ENCODE measurements at regions of chr20 and their contacts with region 1.

Region 1: GRCh38 chr20:48657475-48658470 is 170.0 kb downstream of the PREX1 start:
- DNase-seq: peak; percentile 19
- H3K4me3 ChIP-seq: no peak overlapping the region
- CTCF ChIP-seq: peak; percentile 87

Region 2: DNA sequence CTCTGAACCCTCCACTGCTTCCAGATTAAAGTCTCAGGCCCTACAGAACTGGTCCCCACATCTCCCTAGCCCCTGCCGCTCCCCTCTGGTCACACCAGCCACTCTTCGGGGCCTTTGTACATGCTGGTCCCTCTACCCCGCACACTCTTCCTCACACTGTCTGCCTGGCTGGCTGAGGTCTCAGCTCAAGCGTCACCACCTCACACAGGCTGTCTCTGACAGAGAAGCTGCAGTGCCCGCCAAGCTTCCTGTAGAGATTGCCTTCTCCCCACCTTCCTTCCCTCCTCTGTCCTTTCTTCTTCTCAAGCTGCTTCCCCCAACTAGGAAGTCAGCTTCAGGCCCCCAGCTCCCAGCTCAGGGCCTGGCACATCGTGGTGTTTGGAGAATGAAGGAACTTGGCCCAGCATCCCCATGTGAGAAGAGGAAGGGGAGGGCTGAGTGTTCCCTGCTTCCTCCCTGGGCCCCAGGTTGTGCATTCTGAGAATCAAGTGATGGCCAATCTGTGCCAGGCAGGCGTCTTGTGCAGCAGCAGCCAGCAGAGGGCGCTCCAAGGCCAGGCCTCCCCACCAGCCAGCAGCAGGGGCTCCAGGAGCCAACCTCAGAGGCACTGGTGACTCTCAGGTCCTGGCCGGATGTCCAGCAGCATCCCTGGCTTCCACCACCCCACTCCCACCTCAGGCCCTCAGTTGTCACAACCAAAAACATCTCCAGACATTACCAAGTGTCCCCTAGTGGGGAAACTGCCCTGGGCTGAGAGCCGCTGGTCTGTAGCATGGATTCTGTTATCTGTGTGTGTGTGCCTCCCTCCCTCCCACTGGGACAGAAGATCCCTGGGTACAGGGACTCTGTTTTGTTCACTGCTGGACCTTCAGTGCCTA is 22.1 kb before region 1 on chr20:
- CTCF ChIA-PET with region 1: interaction called, 12 read pairs
- POLR2A ChIA-PET with region 1: no interaction called
- DNase-seq: no peak
- H3K4me3 ChIP-seq: no peak overlapping the region
- CTCF ChIP-seq: peak; percentile 96

Region 3: DNA sequence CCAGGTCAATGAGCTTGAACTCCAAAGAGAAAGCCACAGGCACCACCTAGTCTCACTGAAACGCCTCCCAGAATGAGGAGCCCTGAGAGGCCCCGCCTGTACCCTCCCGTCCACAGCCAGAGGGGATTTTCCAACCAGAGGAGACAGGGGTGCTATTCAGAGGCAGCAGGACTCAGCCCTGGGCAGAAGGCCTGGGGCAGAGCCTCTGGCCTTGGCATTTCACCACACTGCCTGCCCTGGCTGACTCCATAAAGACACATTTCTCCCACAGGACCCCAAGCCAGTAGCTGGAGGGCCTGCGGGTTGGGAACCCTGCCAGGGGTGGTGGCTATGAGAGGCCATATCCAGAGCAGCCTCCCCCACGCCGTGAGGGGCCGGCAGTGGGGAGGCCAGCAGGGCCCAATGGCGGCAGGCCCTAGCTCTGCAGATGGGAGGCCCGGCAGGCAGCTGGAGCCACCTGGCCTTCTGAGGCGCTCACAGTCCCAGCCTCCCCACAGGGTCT is 10.7 kb after region 1 on chr20:
- CTCF ChIA-PET with region 1: interaction called, 40 read pairs
- POLR2A ChIA-PET with region 1: no interaction called
- DNase-seq: no peak
- H3K4me3 ChIP-seq: no peak overlapping the region
- CTCF ChIP-seq: no peak

Region 4: DNA sequence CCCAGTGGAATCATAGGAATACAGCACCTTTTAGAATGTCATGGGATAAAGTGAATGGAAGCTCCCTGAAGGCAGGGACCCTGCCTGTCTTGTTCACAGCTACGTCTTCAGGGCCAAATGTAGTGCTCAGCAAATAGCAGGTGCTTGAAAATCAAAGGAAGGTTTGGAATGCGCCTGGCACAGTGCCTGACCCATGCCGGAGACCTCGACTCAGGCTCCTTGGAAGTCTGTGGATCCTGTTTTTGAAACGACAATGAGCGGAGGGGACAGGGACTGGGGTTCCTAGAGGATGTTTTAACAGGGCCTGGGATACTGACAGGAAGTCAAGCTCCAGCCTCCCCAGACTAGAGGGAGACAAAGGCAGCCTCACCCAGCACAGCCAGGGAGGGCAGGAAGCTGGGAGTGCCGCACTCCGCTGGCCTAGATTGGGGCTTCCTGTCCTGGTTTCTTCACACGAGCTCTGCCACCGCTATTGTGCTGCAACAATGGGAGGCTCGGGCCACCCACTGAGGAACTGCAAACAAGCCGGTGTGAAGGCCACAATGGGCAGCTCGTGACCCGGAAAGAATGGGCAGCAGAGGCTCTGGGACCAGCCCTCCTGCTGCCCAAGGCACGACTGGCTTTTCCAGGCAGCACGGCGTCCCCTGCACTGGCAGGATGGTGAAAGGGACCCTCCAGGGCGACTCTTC is 93.3 kb after region 1 on chr20:
- CTCF ChIA-PET with region 1: no interaction called
- POLR2A ChIA-PET with region 1: no interaction called
- DNase-seq: no peak
- H3K4me3 ChIP-seq: no peak overlapping the region
- CTCF ChIP-seq: no peak

Region 5: GRCh38 chr20:48897246-48897994 is 239.6 kb after region 1 on chr20:
- CTCF ChIA-PET with region 1: interaction called, 54 read pairs
- POLR2A ChIA-PET with region 1: no interaction called
- DNase-seq: no peak
- H3K4me3 ChIP-seq: no peak overlapping the region
- CTCF ChIP-seq: no peak

Region 6: GRCh38 chr20:48912065-48912762 is 254.4 kb after region 1 on chr20:
- CTCF ChIA-PET with region 1: interaction called, 534 read pairs
- POLR2A ChIA-PET with region 1: no interaction called
- DNase-seq: no peak
- H3K4me3 ChIP-seq: no peak overlapping the region
- CTCF ChIP-seq: no peak